Activated CD4-positive, alpha-beta memory T cell treated with anti-CD3 and anti-CD28 coated beads for 36 hours (primary cell): ENCODE measurements at regions of chr3 and their contacts with region 1.

Region 1: GRCh38 chr3:187802928-187803259 is 57.6 kb upstream of the BCL6 start:
- DNase-seq: peak; percentile 89
- H3K4me3 Mint-ChIP-seq: peak overlapping the region; percentile 54
- H3K27ac Mint-ChIP-seq: peak overlapping the region; percentile 95
- H3K4me1 Mint-ChIP-seq: peaks cover 96% of the 10 kb centered on the region
- H3K27me3 Mint-ChIP-seq: no peaks in the 10 kb centered on the region

Region 2: DNA sequence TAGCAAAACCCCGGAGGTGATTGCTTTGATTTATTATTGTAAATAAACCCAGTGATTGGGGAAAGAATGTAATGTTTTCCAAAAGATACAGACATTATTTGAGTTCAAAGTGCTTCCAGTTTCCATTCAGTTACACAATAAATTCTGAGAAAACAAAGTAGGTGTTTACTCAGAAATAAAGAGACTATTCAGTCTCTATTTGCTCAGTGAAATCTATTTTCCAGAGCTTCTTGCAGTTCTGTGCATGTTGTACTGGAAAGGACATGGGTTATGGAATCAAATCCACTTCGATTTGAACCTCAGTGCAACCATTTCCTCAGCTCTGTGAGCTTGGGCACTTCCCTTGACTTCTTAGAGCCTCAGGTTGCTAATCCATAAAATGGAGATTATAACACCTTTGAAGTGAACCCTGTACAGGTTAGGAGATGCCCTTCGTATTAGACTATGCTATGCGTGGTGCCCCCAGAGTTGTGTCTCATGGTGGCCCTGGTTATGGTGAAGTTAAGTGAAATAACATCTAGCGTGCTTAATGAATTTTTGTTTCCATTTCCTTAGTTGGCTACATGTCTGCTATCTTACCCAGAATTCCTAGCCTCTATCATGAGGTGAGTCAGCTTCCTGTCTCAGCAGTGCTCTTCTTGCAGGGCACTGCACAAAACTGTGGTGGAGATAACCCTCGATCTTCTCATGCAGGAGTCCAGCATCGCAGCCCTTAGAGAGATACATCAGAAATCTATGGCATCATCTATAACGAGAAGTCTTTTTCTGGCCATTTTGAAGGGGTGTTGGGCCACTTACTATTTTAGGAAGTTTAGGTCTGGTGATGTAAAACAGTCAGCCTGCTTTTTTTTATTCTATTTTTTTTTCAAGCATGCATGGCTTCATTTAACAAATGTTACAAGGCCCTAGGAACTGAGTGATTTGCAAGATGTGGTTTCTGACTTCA is 761.3 kb before region 1 on chr3:
- CTCF ChIA-PET with region 1: no interaction called
- POLR2A ChIA-PET with region 1: no interaction called
- intact Hi-C with region 1: loop called (anchors 10 kb)
- DNase-seq: peak; percentile 70
- H3K4me3 Mint-ChIP-seq: peak overlapping the region; percentile 47
- H3K27ac Mint-ChIP-seq: peak overlapping the region; percentile 92
- H3K4me1 Mint-ChIP-seq: peaks cover 82% of the 10 kb centered on the region
- H3K27me3 Mint-ChIP-seq: no peaks in the 10 kb centered on the region

Region 3: DNA sequence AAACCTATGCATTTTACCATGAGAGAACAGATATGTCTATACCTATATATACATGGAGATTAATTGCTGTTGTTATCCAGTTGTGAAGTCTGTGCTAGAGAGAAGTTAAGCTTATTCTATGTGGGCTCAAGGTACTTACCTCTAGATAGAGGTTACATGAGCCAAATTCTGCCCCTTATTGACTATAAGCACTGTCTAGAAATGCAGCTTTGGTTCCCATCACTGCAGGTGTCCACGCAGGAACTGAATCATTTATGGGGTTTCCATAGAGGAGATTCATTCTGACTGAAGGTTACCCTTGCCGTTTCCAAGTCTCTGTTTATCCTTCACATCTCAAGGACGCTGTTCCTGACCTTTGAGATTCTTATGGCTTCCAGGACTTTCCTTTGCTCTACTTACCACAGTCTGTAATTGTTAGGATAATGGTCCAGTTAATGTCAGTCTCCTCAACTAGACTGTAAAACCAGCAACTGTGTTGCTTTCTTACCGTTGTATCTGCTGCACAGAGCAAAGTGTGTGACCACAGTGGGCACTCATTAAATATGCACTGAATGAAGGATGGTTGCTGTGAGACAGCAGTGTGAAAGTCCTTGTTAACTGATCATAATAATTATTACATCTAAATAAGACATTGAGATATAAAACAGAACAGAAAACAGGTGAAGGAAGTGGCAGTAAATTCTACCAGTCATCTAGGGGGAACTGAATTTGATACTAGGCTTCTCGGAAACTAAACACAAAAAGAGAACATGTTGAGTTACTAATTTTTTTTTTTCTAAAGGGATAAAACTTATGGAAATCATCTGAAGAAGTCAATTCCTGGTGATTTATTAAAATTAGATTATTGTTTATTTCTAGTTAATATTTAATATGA is 13.7 kb before region 1 on chr3:
- CTCF ChIA-PET with region 1: interaction called, 3 read pairs
- POLR2A ChIA-PET with region 1: interaction called, 10 read pairs
- intact Hi-C with region 1: loop called (anchors 1 kb)
- DNase-seq: peak; percentile 45
- H3K4me3 Mint-ChIP-seq: no peak overlapping the region
- H3K27ac Mint-ChIP-seq: peak overlapping the region; percentile 77
- H3K4me1 Mint-ChIP-seq: peaks cover 23% of the 10 kb centered on the region
- H3K27me3 Mint-ChIP-seq: no peaks in the 10 kb centered on the region

Region 4: GRCh38 chr3:188061133-188061532 is 258.2 kb after region 1 on chr3:
- CTCF ChIA-PET with region 1: no interaction called
- POLR2A ChIA-PET with region 1: no interaction called
- intact Hi-C with region 1: loop called (anchors 1 kb)
- DNase-seq: peak; percentile 81
- H3K4me3 Mint-ChIP-seq: peak overlapping the region; percentile 44
- H3K27ac Mint-ChIP-seq: peak overlapping the region; percentile 80
- H3K4me1 Mint-ChIP-seq: peaks cover 35% of the 10 kb centered on the region
- H3K27me3 Mint-ChIP-seq: no peaks in the 10 kb centered on the region

Region 5: DNA sequence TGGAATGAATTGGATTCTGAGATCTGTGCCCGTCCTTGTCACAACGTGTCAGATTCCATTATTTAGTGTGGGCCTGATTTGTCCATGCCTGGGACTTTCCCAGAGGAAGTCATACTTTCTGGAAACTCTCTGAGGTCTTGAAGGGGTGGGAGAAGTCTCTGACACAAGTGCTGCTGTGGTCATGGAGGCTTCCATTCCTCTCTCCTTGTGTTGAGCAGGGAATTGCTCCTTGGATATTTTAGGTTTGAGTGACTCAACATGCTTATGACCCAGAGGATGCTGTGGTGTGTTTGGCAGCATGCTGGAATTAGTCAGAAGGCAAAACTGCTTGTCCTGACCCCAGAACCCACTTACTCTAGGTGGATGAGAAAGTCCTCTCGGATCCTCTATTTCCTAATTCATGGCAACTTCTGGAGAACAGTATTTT is 483.2 kb after region 1 on chr3:
- CTCF ChIA-PET with region 1: interaction called, 4 read pairs
- POLR2A ChIA-PET with region 1: interaction called, 4 read pairs
- intact Hi-C with region 1: loop called (anchors 1 kb)
- DNase-seq: peak; percentile 42
- H3K4me3 Mint-ChIP-seq: no peak overlapping the region
- H3K27ac Mint-ChIP-seq: peak overlapping the region; percentile 34
- H3K4me1 Mint-ChIP-seq: peaks cover 51% of the 10 kb centered on the region
- H3K27me3 Mint-ChIP-seq: no peaks in the 10 kb centered on the region

Region 6: GRCh38 chr3:188683032-188683521 is 880.2 kb after region 1 on chr3:
- CTCF ChIA-PET with region 1: no interaction called
- POLR2A ChIA-PET with region 1: no interaction called
- intact Hi-C with region 1: loop called (anchors 10 kb)
- DNase-seq: peak; percentile 74
- H3K4me3 Mint-ChIP-seq: no peak overlapping the region
- H3K27ac Mint-ChIP-seq: peak overlapping the region; percentile 40
- H3K4me1 Mint-ChIP-seq: peaks cover 41% of the 10 kb centered on the region
- H3K27me3 Mint-ChIP-seq: no peaks in the 10 kb centered on the region